H1 (cell line): ENCODE measurements at regions of chr5 and their contacts with region 1.

Region 1: GRCh38 chr5:175796536-175797499 is 74.6 kb upstream of the CPLX2 start:
- DNase-seq: peak; percentile 56 to 95
- H3K4me3 ChIP-seq: peak overlapping the region; percentile 24 to 78 (median 60)
- H3K27ac ChIP-seq: no peak overlapping the region
- H3K4me1 ChIP-seq: peaks cover 2 to 12% (median 9%) of the 10 kb centered on the region in 4 experiments; a peak in 5 of 7 replicates
- H3K27me3 ChIP-seq: peaks cover 4 to 12% (median 8%) of the 10 kb centered on the region in 4 experiments; a peak in 6 of 7 replicates
- CTCF ChIP-seq: no peak
- EP300 ChIP-seq: peak in 1 of 2 experiments; percentile 91; a peak in 2 of 3 replicates
- POLR2A ChIP-seq: no peak
- RAD21 ChIP-seq: peak in 1 of 2 experiments; percentile 20; a peak in 1 of 4 replicates

Region 2: DNA sequence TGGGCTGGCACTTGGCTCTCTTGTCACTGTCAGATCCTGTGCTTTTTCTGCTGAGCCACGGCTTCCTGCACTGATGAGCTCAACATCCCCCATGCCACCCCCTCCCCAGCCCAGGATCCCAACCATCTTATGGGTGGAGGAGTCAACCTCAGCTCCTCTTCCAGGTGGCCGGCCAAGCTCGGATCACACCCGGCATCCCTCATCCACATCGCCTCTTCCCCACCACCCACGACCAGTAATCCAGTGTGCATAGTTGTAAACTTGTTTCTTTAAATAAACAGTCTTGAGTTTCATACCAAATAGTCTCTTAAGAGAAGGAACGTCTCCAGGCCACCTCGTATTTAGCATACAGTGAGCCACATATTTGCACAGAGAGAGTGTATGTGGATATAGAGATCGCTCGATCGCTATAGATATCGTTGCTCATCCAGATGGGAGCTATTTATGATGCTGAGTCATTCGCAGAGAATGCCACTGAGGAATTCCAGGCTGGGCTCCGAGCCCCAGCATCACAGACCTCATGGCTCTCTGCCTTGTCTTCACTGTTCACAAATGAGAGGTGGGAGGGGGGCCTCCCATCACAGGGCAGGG is 12.8 kb after region 1 on chr5:
- CTCF ChIA-PET with region 1: interaction called, 12 read pairs
- POLR2A ChIA-PET with region 1: interaction called, 4 read pairs
- DNase-seq: no peak
- H3K4me3 ChIP-seq: no peak overlapping the region
- H3K27ac ChIP-seq: no peak overlapping the region
- H3K4me1 ChIP-seq: peaks cover 0 to 7% (median 4%) of the 10 kb centered on the region in 4 experiments; a peak in 2 of 7 replicates
- H3K27me3 ChIP-seq: no peaks in the 10 kb centered on the region
- CTCF ChIP-seq: no peak
- EP300 ChIP-seq: no peak
- POLR2A ChIP-seq: no peak
- RAD21 ChIP-seq: no peak

Region 3: DNA sequence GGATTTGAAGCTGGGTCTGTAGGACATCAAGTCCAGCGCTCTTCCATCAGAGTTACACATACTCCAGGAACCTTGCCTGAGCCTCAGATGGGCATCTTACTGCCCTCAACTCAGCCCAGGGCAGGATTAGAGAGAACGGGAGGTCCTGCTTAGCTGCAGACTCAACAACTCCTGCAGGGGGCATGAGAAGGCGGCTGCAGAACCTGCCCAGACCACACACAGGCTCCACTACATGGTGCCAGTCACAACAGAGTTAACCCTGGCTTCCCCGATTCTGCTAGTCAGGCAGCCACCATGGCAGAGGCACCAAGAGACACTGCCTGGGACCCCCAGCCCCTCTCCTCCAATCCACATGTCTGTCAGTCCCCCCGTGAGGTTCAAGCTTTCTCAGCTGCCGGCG is 50.7 kb after region 1 on chr5:
- CTCF ChIA-PET with region 1: interaction called, 16 read pairs
- POLR2A ChIA-PET with region 1: no interaction called
- DNase-seq: no peak
- H3K4me3 ChIP-seq: no peak overlapping the region
- H3K27ac ChIP-seq: no peak overlapping the region
- H3K4me1 ChIP-seq: peaks cover 0 to 21% (median 14%) of the 10 kb centered on the region in 4 experiments; a peak in 6 of 7 replicates
- H3K27me3 ChIP-seq: no peaks in the 10 kb centered on the region
- CTCF ChIP-seq: peak in 2 of 3 experiments; percentile 83; a peak in 3 of 4 replicates
- EP300 ChIP-seq: no peak
- POLR2A ChIP-seq: no peak
- RAD21 ChIP-seq: peak; percentile 59 to 74